Activated B cell treated with CpG ODN at 0.5 μM for 24 hours (primary cell): ENCODE measurements at regions of chr7 and their contacts with region 1.

Region 1: DNA sequence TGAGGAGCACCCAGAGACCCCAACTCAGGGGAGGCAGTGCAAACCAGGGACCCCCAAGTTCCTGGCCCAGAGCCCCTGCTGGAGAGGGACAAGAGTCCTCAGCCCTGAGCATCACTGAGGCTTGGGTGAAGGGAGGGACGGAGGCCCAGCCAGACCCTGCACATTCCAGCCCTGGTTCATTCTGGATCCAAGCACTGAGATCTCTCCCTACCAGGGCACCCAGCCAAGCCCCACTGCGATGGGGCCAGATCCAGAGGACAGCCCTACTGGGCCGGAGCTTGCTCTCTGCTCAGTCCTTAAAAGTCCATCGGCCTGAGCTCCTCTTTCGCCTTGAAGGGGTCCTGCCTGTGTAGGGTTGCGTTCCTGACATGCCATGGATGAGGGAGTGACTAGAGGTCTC is 40.5 kb upstream of the RABGEF1 start:
- DNase-seq: no peak
- ATAC-seq: no peak
- H3K4me3 Mint-ChIP-seq: no peak overlapping the region
- H3K27ac Mint-ChIP-seq: no peak overlapping the region
- H3K4me1 Mint-ChIP-seq: no peaks in the 10 kb centered on the region
- H3K27me3 Mint-ChIP-seq: no peaks in the 10 kb centered on the region
- CTCF ChIP-seq: no peak

Region 2: GRCh38 chr7:66800591-66800990 is 100.6 kb after region 1 on chr7:
- CTCF ChIA-PET with region 1: no interaction called
- POLR2A ChIA-PET with region 1: interaction called, 17 read pairs
- intact Hi-C with region 1: no loop called
- DNase-seq: no peak
- ATAC-seq: peak; percentile 68
- H3K4me3 Mint-ChIP-seq: no peak overlapping the region
- H3K27ac Mint-ChIP-seq: peak overlapping the region; percentile 67
- H3K4me1 Mint-ChIP-seq: peaks cover 13% of the 10 kb centered on the region
- H3K27me3 Mint-ChIP-seq: no peaks in the 10 kb centered on the region
- CTCF ChIP-seq: no peak

Region 3: DNA sequence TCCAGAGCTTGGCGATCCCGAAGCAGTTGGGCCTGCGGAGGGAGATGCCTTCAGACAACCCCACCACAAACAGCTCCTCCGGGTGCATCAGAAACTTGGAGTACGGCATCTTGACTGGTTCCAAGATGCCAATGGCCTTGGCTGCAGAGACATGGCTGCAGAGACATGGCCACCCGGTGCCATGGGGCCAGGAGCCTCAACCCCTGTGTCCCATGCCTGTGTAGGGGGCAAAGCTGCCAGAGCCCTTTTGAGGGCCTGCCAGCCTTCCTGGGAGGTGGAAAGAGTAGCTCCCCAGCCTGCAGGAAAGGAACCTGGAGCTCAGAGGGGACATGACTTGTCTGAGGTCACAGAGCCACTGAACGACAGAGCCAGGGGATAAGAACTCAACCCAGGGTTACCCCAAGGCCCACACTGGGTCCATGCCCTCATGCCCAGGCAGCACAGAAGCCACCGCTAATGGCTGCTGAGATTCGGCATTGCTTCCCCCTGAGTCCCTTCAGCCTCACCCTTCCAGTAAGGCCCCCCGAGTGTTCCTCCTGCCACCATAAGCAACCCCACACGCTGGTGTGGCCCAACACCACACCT is 124.1 kb after region 1 on chr7:
- CTCF ChIA-PET with region 1: no interaction called
- POLR2A ChIA-PET with region 1: no interaction called
- intact Hi-C with region 1: no loop called
- DNase-seq: no peak
- ATAC-seq: no peak
- H3K4me3 Mint-ChIP-seq: no peak overlapping the region
- H3K27ac Mint-ChIP-seq: no peak overlapping the region
- H3K4me1 Mint-ChIP-seq: no peaks in the 10 kb centered on the region
- H3K27me3 Mint-ChIP-seq: no peaks in the 10 kb centered on the region
- CTCF ChIP-seq: no peak

Region 4: GRCh38 chr7:67302113-67303039 is 602.4 kb after region 1 on chr7:
- CTCF ChIA-PET with region 1: no interaction called
- POLR2A ChIA-PET with region 1: no interaction called
- intact Hi-C with region 1: no loop called
- DNase-seq: peak; percentile 95
- ATAC-seq: peak; percentile 86
- H3K4me3 Mint-ChIP-seq: peak overlapping the region; percentile 93
- H3K27ac Mint-ChIP-seq: peak overlapping the region; percentile 94
- H3K4me1 Mint-ChIP-seq: peaks cover 31% of the 10 kb centered on the region
- H3K27me3 Mint-ChIP-seq: no peaks in the 10 kb centered on the region
- CTCF ChIP-seq: no peak